Transverse colon (tissue), 4 donors: ENCODE measurements at regions of chr1 and their contacts with region 1.

Region 1: GRCh38 chr1:184242507-184242943 is 144.3 kb upstream of the C1orf21 start:
- DNase-seq: no peak
- H3K4me3 ChIP-seq: no peak overlapping the region
- H3K27ac ChIP-seq: no peak overlapping the region
- H3K4me1 ChIP-seq: peaks cover 0 to 6% (median 0%) of the 10 kb centered on the region in 4 donors
- H3K27me3 ChIP-seq: no peaks in the 10 kb centered on the region
- CTCF ChIP-seq: peak in 1 of 5 experiments; percentile 6
- EP300 ChIP-seq: no peak
- POLR2A ChIP-seq: no peak

Region 2: DNA sequence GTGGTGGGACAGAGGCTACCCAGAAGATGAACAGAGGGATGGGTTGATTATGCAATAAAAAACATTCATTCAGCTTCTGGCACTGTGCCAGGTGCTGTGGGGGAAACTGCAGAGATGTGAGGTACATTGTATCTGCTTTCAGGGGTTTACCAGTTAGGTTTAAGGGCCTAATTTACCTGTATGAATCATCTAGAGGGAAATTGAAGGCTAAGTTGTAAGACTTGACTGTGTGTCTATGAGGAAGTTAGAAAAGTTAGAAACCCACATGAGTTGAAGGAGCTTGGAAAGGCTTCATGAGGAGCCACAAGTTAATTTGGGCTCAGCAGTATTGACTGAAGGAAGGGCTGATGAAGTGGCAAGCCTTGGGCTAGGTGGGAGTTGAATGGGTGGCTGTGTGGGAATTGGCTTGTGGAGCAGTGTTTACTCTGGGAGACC is 552.7 kb before region 1 on chr1:
- in situ Hi-C with region 1: no loop called
- intact Hi-C with region 1: no loop called
- DNase-seq: no peak
- H3K4me3 ChIP-seq: no peak overlapping the region
- H3K27ac ChIP-seq: no peak overlapping the region
- H3K4me1 ChIP-seq: no peaks in the 10 kb centered on the region
- H3K27me3 ChIP-seq: no peaks in the 10 kb centered on the region
- CTCF ChIP-seq: no peak
- EP300 ChIP-seq: no peak
- POLR2A ChIP-seq: no peak

Region 3: DNA sequence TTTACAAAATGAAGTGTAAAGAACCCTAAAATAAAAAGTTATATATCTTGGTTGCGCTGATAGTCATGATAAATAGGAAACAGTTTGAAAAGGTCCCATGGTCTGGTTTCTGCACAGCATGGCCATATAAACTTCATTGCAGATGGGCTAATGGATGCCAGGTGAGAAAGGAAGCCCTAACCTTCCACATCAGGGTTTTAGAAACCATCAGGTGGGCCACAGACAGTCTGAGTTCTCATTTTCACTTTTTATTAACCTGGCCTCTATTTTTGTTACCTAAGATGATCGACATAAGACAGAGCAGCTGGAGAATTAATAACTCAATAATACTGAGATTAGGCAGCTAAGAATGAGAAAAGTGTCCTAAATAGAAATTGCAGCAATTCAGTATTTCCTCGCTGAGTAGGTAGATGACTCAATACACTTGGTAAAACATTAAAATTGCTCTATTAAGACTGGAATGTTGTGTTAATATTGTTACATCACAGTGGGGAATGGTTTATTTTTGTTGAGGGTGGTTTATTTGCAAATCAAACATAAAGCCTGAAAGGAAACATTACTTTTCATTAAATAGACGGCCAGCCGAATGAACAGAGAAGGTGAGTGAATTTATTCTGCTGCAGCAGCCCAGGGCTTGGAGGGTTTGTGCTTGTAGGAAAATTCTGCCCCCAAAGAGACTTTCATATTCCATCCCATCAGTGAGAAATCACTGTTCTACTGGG is 165.5 kb after region 1 on chr1:
- in situ Hi-C with region 1: no loop called
- intact Hi-C with region 1: no loop called
- DNase-seq: no peak
- H3K4me3 ChIP-seq: no peak overlapping the region
- H3K27ac ChIP-seq: peak overlapping the region in 1 of 4 donors; percentile 16
- H3K4me1 ChIP-seq: peaks cover 4 to 52% (median 17%) of the 10 kb centered on the region in 4 donors
- H3K27me3 ChIP-seq: no peaks in the 10 kb centered on the region
- CTCF ChIP-seq: no peak
- EP300 ChIP-seq: no peak
- POLR2A ChIP-seq: no peak

Region 4: GRCh38 chr1:184574588-184574987 is 332.1 kb after region 1 on chr1:
- in situ Hi-C with region 1: loop called in 1 of 4 experiments (anchors 10 kb)
- intact Hi-C with region 1: no loop called
- DNase-seq: no peak
- H3K4me3 ChIP-seq: no peak overlapping the region
- H3K27ac ChIP-seq: peak overlapping the region in 3 of 4 donors; percentile 10 to 33 (median 12)
- H3K4me1 ChIP-seq: no peaks in the 10 kb centered on the region
- H3K27me3 ChIP-seq: no peaks in the 10 kb centered on the region
- CTCF ChIP-seq: no peak
- EP300 ChIP-seq: no peak
- POLR2A ChIP-seq: no peak

Region 5: GRCh38 chr1:184664042-184664655 is 421.6 kb after region 1 on chr1:
- in situ Hi-C with region 1: loop called in 2 of 4 experiments (anchors 25 kb)
- intact Hi-C with region 1: no loop called
- DNase-seq: peak; percentile 79
- H3K4me3 ChIP-seq: peak overlapping the region in 3 of 4 donors; percentile 24 to 46 (median 26)
- H3K27ac ChIP-seq: peak overlapping the region in 1 of 4 donors; percentile 20
- H3K4me1 ChIP-seq: peaks cover 7 to 21% (median 11%) of the 10 kb centered on the region in 4 donors
- H3K27me3 ChIP-seq: no peaks in the 10 kb centered on the region
- CTCF ChIP-seq: peak; percentile 88 to 97 (median 93)
- EP300 ChIP-seq: no peak
- POLR2A ChIP-seq: no peak